ENCODE measurements at regions of chr1 and their contacts with region 1.

Region 1: GRCh38 chr1:201254625-201255506 is 28.4 kb upstream of the PKP1 start:
- DNase-seq: peak in 1 of 2 donors; percentile 53
- ATAC-seq: peak; percentile 57 to 87
- H3K4me3 ChIP-seq: no peak overlapping the region
- H3K27ac ChIP-seq: no peak overlapping the region
- H3K4me1 ChIP-seq: no peaks in the 10 kb centered on the region
- H3K27me3 ChIP-seq: peaks cover under 1 to 9% (median 7%) of the 10 kb centered on the region in 3 donors
- CTCF ChIP-seq: peak; percentile 94 to 99 (median 97)
- POLR2A ChIP-seq: no peak

Region 2: DNA sequence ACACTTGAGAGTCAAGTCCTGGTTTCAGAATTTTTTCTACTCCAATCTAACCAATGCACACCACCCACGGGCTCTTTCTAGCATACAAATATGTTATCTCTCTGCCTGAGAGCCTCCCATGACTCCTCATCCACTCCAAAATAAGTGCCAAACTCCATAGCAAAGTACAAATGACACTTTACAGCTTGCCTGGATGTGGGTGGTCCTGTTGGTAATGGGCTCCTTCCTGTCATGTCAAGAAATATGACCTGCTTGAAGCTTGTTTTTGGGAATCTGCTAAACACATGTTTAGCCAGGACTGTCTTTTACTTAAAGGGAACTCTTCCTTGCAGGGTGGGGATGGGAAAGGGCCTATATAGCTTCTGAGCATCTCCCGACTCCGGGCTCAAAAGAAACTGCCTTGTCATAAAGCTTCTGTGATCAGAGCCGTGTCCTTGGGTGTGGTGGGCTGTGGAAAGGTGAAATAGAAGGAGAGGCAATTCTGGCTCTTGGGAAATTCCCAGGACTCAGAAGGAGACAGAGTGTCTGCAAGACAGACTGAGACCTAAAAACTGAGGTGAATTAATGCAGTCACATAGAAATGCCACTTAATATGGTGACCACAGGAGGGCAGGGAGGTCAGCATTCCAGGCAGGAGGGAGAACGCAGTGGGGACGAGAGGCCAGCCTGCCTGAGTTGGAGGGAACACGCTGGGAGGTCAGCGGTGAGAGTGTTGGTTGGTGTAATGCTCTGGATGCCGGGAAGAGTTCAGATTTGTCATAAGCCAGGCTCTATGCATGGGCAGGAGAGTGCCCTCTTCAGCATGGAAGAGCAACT is 70.4 kb before region 1 on chr1:
- in situ Hi-C with region 1: no loop called
- intact Hi-C with region 1: no loop called
- DNase-seq: peak; percentile 66 to 88
- ATAC-seq: peak; percentile 94 to 98
- H3K4me3 ChIP-seq: no peak overlapping the region
- H3K27ac ChIP-seq: peak overlapping the region; percentile 76 to 92 (median 84)
- H3K4me1 ChIP-seq: peaks cover 38 to 40% of the 10 kb centered on the region in 2 donors
- H3K27me3 ChIP-seq: no peaks in the 10 kb centered on the region
- CTCF ChIP-seq: peak; percentile 52 to 74 (median 71)
- POLR2A ChIP-seq: peak; percentile 16 to 21

Region 3: DNA sequence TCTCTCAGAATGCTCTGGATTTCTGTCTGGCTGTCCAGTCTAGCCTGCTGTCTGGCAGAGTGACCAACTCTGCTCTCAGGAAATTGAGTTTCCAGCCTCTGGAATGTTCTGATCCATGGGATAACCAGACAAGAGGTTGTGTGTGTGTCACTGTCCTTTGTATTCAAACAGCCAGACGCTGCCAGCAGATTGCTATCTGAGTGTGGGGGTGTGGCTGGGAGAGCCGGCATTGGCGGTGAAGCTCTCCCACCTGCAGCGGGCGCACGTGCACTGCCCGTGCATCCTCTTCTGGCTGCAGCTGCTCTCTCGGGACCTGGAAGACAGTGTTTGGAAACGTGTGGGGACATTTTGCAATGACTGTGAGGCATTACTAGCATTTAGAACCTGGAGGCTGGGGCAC is 54.6 kb after region 1 on chr1:
- in situ Hi-C with region 1: no loop called
- intact Hi-C with region 1: loop called (anchors 5 kb)
- DNase-seq: peak; percentile 83 to 91
- ATAC-seq: peak; percentile 91 to 92
- H3K4me3 ChIP-seq: no peak overlapping the region
- H3K27ac ChIP-seq: peak overlapping the region; percentile 60 to 78 (median 72)
- H3K4me1 ChIP-seq: peaks cover 21 to 28% of the 10 kb centered on the region in 2 donors
- H3K27me3 ChIP-seq: no peaks in the 10 kb centered on the region
- CTCF ChIP-seq: peak in 2 of 5 experiments; percentile 33 to 35
- POLR2A ChIP-seq: peak in 1 of 2 donors; percentile 27